CD4-positive, alpha-beta memory T cell (primary cell): ENCODE measurements at regions of chr12 and their contacts with region 1.

Region 1: GRCh38 chr12:69359531-69360347 is at the start of gene YEATS4:
- DNase-seq: peak; percentile 86 to 96 (median 88)
- H3K4me3 ChIP-seq: peak within 1 kb of the TSS; percentile 67 to 74
- H3K4me3 Mint-ChIP-seq: peak within 1 kb of the TSS; percentile 83 to 97 (median 93)
- H3K27ac ChIP-seq: peak within 1 kb of the TSS; percentile 86
- H3K27ac Mint-ChIP-seq: peak within 1 kb of the TSS; percentile 82 to 96 (median 94)
- H3K4me1 ChIP-seq: peaks cover 11% of the 10 kb centered on the region
- H3K4me1 Mint-ChIP-seq: peaks cover 24 to 29% (median 27%) of the 10 kb centered on the region in 4 donors
- H3K27me3 ChIP-seq: no peaks in the 10 kb centered on the region
- H3K27me3 Mint-ChIP-seq: peaks cover under 1 to 1% of the 10 kb centered on the region in 2 donors
- total RNA-seq, gene YEATS4: 18.2 to 19.6 TPM

Region 2: GRCh38 chr12:69157023-69157655 is 202.6 kb before region 1 on chr12:
- CTCF ChIA-PET with region 1: interaction called, 8 read pairs
- POLR2A ChIA-PET with region 1: no interaction called
- intact Hi-C with region 1: loop called (anchors 1 kb)
- DNase-seq: peak; percentile 82 to 85 (median 83)
- H3K4me3 ChIP-seq: peak overlapping the region in 1 of 2 donors; percentile 6
- H3K4me3 Mint-ChIP-seq: peak overlapping the region; percentile 46 to 77 (median 70)
- H3K27ac ChIP-seq: no peak overlapping the region
- H3K27ac Mint-ChIP-seq: peak overlapping the region in 3 of 7 donors; percentile 56 to 69 (median 63)
- H3K4me1 ChIP-seq: peaks cover 20% of the 10 kb centered on the region
- H3K4me1 Mint-ChIP-seq: peaks cover 18 to 31% (median 22%) of the 10 kb centered on the region in 4 donors
- H3K27me3 ChIP-seq: no peaks in the 10 kb centered on the region
- H3K27me3 Mint-ChIP-seq: no peaks in the 10 kb centered on the region

Region 3: DNA sequence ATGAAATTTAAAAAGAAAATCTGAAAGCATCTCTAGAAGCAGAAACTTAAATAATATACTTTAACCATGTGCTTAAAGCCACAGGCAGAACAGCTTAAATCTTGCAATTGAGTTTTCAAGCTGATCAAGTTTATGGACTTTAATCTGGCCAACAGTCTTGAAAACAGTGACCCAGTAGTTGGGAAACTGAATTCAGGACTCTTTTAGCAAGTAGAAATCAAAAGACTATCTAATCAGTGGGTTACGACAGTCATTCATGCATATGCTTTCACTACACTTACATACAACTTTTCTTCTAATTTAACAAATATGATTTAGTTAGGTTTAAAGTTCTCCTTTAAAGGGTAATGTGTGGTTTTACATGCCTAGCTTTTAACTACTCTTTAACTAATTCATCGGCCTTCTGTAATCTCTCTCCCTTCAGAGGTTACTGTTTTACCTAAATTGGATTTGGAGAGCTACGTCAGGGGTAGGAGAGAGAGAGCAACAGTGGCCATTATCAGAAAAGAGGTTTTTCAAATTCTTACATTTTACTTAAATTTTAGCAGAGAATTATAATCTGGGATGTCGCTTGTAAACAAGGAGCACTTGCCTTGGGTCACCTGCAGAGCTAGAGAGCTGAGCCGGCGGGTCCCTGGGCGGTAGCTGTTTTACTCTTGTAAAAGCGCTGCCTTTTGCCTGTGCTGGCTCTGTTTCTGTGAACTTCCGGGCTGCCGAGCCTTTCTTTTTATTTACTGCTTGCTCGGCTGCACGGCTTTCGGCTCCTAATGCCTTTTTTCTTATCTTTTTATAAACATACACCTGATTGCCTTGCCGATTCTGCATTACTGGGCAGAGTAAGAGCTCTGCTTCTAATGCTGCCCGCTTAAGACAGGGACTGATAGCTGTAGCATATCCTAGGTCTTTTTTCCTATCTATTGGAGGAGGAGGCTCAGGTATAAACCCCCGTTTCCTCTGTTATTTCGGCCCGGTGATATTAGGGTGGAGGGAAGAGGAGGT is 29.0 kb before region 1 on chr12:
- CTCF ChIA-PET with region 1: interaction called, 82 read pairs
- POLR2A ChIA-PET with region 1: interaction called, 73 read pairs
- intact Hi-C with region 1: loop called (anchors 1 kb)
- DNase-seq: peak; percentile 72 to 79 (median 74)
- H3K4me3 ChIP-seq: peak overlapping the region; percentile 49 to 95
- H3K4me3 Mint-ChIP-seq: peak overlapping the region; percentile 94 to 99 (median 96)
- H3K27ac ChIP-seq: peak overlapping the region; percentile 72
- H3K27ac Mint-ChIP-seq: peak overlapping the region; percentile 81 to 99 (median 96)
- H3K4me1 ChIP-seq: peaks cover 60% of the 10 kb centered on the region
- H3K4me1 Mint-ChIP-seq: peaks cover 36 to 64% (median 52%) of the 10 kb centered on the region in 4 donors
- H3K27me3 ChIP-seq: no peaks in the 10 kb centered on the region
- H3K27me3 Mint-ChIP-seq: no peaks in the 10 kb centered on the region

Region 4: GRCh38 chr12:69570545-69571399 is 211.0 kb after region 1 on chr12:
- CTCF ChIA-PET with region 1: interaction called, 146 read pairs
- POLR2A ChIA-PET with region 1: interaction called, 9 read pairs
- intact Hi-C with region 1: loop called (anchors 1 kb)
- DNase-seq: peak; percentile 59 to 76 (median 66)
- H3K4me3 ChIP-seq: no peak overlapping the region
- H3K4me3 Mint-ChIP-seq: no peak overlapping the region
- H3K27ac ChIP-seq: peak overlapping the region; percentile 39
- H3K27ac Mint-ChIP-seq: peak overlapping the region in 5 of 7 donors; percentile 24 to 71 (median 50)
- H3K4me1 ChIP-seq: no peaks in the 10 kb centered on the region
- H3K4me1 Mint-ChIP-seq: peaks cover 0 to 4% (median 2%) of the 10 kb centered on the region in 4 donors
- H3K27me3 ChIP-seq: no peaks in the 10 kb centered on the region
- H3K27me3 Mint-ChIP-seq: no peaks in the 10 kb centered on the region

Region 5: DNA sequence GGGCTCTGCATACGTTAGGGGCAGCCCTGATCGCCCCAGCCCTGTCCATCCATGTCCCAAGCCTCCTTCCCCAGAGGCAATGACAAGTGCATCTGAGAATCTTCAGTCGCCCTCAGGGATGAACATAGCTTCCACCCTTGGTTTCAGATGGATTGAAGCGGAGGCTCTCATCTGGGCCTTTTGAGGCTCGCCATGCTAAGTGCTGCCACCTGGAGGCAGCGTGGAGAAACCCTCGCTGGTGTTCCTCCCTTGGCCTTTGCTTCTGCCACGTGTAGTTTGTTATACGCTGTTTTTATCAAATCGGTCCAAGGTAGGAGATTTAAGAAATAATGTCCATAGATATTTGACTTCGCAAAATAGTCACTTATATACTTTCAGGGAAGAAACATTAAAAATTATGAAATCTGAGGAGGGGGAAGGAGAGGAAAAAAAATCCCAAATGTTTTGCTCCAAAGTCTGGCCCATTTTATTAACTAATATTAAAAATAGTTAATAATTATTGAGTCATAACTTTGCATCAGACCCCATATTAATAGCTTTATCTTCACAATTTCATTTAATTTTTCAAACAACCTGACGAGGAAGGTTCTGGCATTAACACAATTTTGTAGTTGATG is 279.8 kb after region 1 on chr12:
- CTCF ChIA-PET with region 1: interaction called, 108 read pairs
- POLR2A ChIA-PET with region 1: no interaction called
- intact Hi-C with region 1: no loop called
- DNase-seq: peak; percentile 40 to 53 (median 46)
- H3K4me3 ChIP-seq: no peak overlapping the region
- H3K4me3 Mint-ChIP-seq: no peak overlapping the region
- H3K27ac ChIP-seq: no peak overlapping the region
- H3K27ac Mint-ChIP-seq: peak overlapping the region in 1 of 7 donors; percentile 59
- H3K4me1 ChIP-seq: no peaks in the 10 kb centered on the region
- H3K4me1 Mint-ChIP-seq: peaks cover 0 to 2% (median 0%) of the 10 kb centered on the region in 4 donors
- H3K27me3 ChIP-seq: no peaks in the 10 kb centered on the region
- H3K27me3 Mint-ChIP-seq: no peaks in the 10 kb centered on the region

Region 6: DNA sequence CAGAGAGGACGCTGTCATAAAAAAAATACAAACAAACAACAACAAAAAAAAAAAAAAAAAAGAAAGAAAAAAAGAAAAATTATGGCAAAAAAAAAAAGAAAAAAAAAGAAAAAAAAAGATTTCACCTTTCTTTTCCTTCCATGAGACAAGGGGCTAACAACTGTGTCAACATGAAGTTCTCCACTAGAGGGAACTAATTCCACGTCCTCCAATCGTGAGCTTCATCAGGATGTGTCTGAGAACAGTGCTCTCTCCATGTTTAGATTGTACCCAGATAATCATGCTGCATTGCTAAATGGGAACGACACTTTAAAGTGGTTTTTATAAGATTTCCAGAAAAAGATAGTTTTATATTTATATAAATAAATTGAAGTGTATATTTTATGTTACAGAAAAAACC is 1373.6 kb after region 1 on chr12:
- CTCF ChIA-PET with region 1: no interaction called
- POLR2A ChIA-PET with region 1: no interaction called
- intact Hi-C with region 1: loop called (anchors 5 kb)
- DNase-seq: peak in 2 of 5 donors; percentile 11 to 30
- H3K4me3 ChIP-seq: no peak overlapping the region
- H3K4me3 Mint-ChIP-seq: no peak overlapping the region
- H3K27ac ChIP-seq: no peak overlapping the region
- H3K27ac Mint-ChIP-seq: no peak overlapping the region
- H3K4me1 ChIP-seq: no peaks in the 10 kb centered on the region
- H3K4me1 Mint-ChIP-seq: peaks cover 0 to 1% (median 0%) of the 10 kb centered on the region in 4 donors
- H3K27me3 ChIP-seq: no peaks in the 10 kb centered on the region
- H3K27me3 Mint-ChIP-seq: peaks cover 4 to 5% of the 10 kb centered on the region in 2 donors